A549 (cell line): ENCODE measurements at regions of chr15 and their contacts with region 1.

Region 1: DNA sequence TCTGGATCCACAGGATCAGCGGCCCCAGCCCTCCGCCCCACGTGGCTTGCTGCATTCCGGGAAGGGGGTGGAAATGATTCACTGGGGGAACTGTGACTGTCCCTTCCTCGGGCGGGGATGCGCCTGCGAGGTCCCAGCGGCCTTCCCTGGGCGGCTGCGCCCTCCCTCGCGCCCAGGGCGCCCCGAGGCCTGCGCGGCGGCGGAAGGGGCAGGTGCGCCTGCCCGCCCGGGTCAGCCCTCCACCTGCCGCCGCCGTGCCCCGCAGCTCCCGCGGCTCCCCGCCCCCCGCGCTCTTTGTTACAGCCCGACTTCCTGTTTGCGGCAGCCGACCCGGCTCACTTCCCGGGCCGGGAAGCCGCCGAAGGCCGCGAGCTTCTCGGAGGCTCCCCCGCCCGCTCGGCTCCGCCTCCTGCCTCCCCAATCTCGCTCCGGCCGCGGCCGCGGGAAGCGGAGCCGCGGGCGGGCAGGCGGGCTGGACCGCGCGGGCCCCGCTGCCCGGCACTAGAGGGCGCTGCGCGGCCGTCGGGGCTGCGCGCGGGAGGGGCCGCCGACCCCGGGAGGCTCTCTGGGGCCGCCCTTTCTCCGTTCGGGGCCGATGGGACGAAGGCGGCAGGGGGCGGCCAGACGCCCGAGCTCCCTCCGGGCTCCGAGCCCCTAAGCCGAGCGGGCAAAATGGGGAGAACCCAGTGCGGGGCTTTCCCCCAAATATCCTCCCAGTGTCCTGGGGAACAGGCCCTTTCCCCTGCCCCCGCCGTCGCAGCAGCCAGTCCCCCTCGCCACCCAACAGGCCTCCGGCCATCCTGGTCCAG is 11.5 kb upstream of the CHAC1 start:
- DNase-seq: peak; percentile 58 to 63
- ATAC-seq: peak; percentile 76 to 81
- H3K4me3 ChIP-seq: peak overlapping the region; percentile 61
- H3K27ac ChIP-seq: peak overlapping the region; percentile 89 to 94
- H3K4me1 ChIP-seq: peaks cover 18% of the 10 kb centered on the region
- CTCF ChIP-seq: peak; percentile 89
- EP300 ChIP-seq: no peak
- POLR2A ChIP-seq: no peak; the same call in 1 of the 2 replicates
- RAD21 ChIP-seq: peak; percentile 32 to 66; a peak in 4 of 5 replicates

Region 2: DNA sequence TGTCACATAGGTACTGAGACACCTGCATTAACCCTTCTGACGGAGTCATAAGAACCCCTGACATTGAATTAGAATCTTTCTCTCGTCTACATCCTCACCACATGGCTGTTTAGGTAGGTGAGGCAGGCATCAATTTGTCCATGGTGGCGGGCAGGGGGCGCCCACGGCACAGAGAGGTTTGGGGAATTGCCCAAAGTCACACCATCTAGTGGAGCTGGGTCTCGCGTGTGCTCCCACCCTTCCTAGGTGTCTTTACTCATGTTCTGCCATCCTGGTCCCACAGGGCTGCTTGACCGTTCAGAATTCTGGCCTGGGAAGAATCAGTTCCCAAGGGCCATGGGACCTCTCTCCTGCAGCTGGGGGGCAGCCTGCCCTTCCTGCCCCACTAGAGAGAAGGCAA is 27.2 kb before region 1 on chr15:
- CTCF ChIA-PET with region 1: interaction called, 13 read pairs
- POLR2A ChIA-PET with region 1: no interaction called
- DNase-seq: no peak
- ATAC-seq: peak in 1 of 2 experiments; percentile 52; a peak in 3 of 6 replicates
- H3K4me3 ChIP-seq: no peak overlapping the region
- H3K27ac ChIP-seq: no peak overlapping the region
- H3K4me1 ChIP-seq: peaks cover 6% of the 10 kb centered on the region; the same call in 2 of the 3 replicates
- CTCF ChIP-seq: peak; percentile 18; the same call in 1 of the 3 replicates
- EP300 ChIP-seq: no peak
- POLR2A ChIP-seq: no peak
- RAD21 ChIP-seq: peak; percentile 28 to 46; a peak in 4 of 5 replicates

Region 3: DNA sequence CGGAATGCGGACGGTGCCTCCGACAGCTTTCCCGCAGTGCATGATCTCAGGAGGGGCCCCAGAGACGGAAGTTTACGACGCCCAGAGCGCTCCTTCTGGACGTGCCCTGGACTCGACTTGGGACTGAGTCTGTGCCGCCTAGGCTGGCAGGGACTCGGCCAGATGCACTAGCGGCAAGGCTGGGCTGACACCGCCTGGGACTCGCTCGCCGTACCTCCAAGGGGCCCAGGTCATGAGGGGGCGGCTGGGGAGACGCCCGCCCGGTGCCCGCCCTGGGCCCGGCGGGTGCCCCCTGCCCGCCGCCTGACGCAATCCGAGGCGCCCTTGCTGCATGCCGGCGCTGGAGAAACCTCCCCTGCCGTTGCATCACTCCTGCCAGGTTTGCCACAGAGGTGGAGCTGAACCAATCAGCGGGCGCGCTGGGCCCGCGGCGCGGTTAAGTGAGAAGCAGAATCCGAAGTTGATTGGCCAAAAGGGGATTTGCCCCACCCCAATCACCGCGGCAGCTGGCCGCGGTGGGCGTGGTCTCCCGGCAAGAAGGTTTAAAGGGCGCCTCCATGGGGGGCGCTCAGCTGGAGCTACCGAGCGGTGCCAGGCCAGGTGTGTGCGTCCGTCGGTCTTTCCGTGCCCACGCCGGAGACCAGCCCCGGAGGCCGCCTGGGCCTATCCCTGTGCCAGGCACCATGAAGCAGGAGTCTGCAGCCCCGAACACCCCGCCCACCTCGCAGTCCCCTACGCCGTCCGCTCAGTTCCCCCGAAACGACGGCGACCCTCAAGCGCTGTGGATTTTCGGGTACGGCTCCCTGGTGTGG is 11.4 kb after region 1 on chr15 and contains the start of gene CHAC1:
- CTCF ChIA-PET with region 1: interaction called, 76 read pairs
- POLR2A ChIA-PET with region 1: interaction called, 29 read pairs
- DNase-seq: peak; percentile 94 to 97
- ATAC-seq: peak; percentile 96
- H3K4me3 ChIP-seq: peak within 1 kb of the TSS; percentile 94
- H3K27ac ChIP-seq: peak within 1 kb of the TSS; percentile 98 to 99
- H3K4me1 ChIP-seq: peaks cover 33% of the 10 kb centered on the region
- CTCF ChIP-seq: no peak
- EP300 ChIP-seq: no peak
- POLR2A ChIP-seq: no peak; the same call in none of the 2 replicates
- RAD21 ChIP-seq: no peak
- polyA plus RNA-seq, gene CHAC1: 22.2 and 25.3 TPM in 2 replicates

Region 4: GRCh38 chr15:40982855-40983254 is 41.1 kb after region 1 on chr15:
- CTCF ChIA-PET with region 1: interaction called, 21 read pairs
- POLR2A ChIA-PET with region 1: no interaction called
- DNase-seq: no peak
- ATAC-seq: no peak
- H3K4me3 ChIP-seq: no peak overlapping the region
- H3K27ac ChIP-seq: no peak overlapping the region
- H3K4me1 ChIP-seq: no peaks in the 10 kb centered on the region
- CTCF ChIP-seq: no peak
- EP300 ChIP-seq: no peak
- POLR2A ChIP-seq: no peak
- RAD21 ChIP-seq: no peak

Region 5: DNA sequence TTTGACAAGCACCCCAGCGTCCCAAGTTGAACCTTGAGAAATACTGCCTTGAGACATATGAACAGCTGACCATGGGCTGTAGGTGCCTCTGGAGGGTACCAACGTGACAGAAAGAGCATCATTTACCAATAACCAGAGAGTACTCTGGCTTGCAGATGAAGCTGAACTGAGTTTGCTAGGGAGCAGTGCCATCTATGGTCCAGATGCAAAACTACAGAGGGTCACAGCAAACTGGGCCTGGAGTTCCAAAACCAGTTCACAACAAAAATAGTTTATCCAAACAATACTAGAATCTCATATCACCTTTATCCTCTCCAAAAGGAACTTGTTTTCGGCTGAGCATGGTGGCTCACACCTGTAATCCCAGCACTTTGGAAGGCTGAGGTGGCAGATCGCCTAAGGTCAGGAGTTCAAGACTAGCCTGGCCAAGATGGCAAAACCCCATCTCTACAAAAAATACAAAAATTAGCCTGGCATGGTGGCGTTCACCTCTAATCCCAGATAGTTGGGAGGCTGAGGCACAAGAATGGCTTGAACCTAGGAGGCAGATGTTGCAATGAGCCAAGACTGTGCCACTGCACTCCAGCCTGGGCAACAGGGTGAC is 80.9 kb after region 1 on chr15:
- CTCF ChIA-PET with region 1: interaction called, 65 read pairs
- POLR2A ChIA-PET with region 1: interaction called, 3 read pairs
- DNase-seq: peak; percentile 31 to 51
- ATAC-seq: peak; percentile 83 to 85
- H3K4me3 ChIP-seq: no peak overlapping the region
- H3K27ac ChIP-seq: no peak overlapping the region
- H3K4me1 ChIP-seq: no peaks in the 10 kb centered on the region
- CTCF ChIP-seq: peak; percentile 57
- EP300 ChIP-seq: no peak
- POLR2A ChIP-seq: no peak
- RAD21 ChIP-seq: peak; percentile 68 to 75